Left lung (tissue), 14 donors: ENCODE measurements at regions of chr19 and their contacts with region 1.

Region 1: DNA sequence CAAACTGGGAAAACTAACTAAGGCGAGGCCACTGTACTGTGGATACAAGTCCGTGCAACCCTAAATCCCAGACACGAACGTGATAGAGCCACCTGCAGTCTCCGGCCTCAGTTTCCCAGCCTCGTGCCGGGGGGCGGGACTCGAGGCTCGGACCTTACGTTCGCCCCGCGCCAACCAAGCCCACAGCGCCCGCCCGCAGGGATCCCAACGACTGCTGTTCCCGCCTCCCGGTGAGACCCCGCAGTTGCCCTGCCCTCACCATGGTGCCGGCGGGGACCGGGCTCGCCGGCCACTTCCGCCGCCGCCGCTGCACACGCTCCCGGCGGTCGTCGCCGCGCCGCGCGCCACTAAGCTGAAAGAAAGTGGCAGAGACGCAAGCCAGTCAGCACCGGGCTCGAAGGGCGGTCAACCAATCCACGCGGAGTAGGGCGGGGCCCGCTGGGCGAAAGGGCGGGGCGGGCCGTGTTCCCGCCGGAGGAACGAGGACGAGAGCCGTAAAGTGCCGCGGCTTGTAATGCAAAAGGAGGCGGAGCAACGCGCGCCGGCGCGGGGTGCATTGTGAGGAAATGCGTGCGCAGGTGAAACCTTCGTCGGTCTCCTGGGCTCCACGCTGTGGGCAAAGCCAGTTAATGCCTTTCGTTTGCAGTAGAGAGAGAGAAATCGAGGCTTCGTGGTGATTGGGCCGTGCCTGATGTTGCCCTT is at the start of gene LSM4:
- DNase-seq: peak; percentile 94 to 98 (median 98)
- ATAC-seq: peak; percentile 94
- H3K4me3 ChIP-seq: peak within 1 kb of the TSS; percentile 58 to 81
- H3K27ac ChIP-seq: peak within 1 kb of the TSS; percentile 81 to 91
- H3K4me1 ChIP-seq: peaks cover 32 to 60% of the 10 kb centered on the region in 2 donors
- H3K27me3 ChIP-seq: no peaks in the 10 kb centered on the region
- CTCF ChIP-seq: no peak
- polyA plus RNA-seq, gene LSM4: 72.7 to 95.5 (median 78.7) TPM

Region 2: DNA sequence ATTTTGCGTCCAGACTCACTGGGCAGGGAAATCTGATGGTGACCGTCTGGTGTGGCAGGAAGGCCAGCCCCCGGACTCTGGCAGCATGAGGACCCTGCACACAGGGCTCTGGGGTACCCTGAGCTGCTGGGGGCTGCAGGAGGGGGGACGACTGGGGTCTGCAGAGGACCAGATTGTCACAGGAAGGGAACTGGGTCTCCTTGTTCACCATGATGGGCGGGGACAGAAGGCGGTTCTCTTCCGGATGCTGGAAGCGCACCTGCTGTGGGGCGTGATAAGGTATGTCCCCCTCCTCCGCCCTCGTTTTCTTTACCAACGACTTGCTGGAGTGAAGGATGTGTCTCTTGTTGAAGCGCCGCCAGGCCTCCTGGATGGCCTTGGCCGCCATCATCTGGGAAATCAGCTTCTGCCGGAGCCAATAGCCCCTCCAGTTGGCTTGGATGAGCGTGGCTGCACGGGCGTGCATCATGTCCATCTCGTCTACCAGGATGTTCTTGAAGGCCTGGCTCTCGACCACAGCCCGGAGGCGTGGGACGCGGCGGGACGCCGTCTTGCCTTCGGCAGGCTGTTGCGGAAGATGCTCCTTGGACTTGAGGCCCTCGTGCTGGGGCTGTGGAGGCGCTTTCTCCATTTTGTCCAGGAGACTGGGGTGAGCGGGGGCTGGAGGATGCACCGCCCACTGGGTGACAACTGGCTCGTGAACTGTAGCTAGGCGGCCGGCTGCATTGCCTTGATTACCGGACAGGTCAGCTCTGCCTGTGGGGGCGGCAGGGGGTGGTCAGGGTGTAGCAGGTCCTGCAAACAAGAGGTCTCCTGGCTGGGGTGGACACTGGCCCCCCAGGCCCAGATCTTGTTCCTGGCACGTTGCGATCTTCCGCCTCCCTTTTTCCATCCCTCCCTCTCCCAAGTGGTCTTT is 55.9 kb before region 1 on chr19:
- intact Hi-C with region 1: no loop called
- DNase-seq: peak in 1 of 4 donors; percentile 48
- ATAC-seq: no peak
- H3K4me3 ChIP-seq: no peak overlapping the region
- H3K27ac ChIP-seq: no peak overlapping the region
- H3K4me1 ChIP-seq: no peaks in the 10 kb centered on the region
- H3K27me3 ChIP-seq: no peaks in the 10 kb centered on the region
- CTCF ChIP-seq: no peak

Region 3: GRCh38 chr19:18279516-18280273 is 43.2 kb before region 1 on chr19:
- intact Hi-C with region 1: loop called in 1 of 2 experiments (anchors 2 kb)
- DNase-seq: peak; percentile 93 to 97 (median 96)
- ATAC-seq: peak; percentile 76
- H3K4me3 ChIP-seq: peak overlapping the region; percentile 89 to 94
- H3K27ac ChIP-seq: peak overlapping the region; percentile 100
- H3K4me1 ChIP-seq: peaks cover 37 to 61% of the 10 kb centered on the region in 2 donors
- H3K27me3 ChIP-seq: no peaks in the 10 kb centered on the region
- CTCF ChIP-seq: peak; percentile 71 to 83